Activated CD8-positive, alpha-beta T cell treated with anti-CD3 and anti-CD28 coated beads, Interleukin-2, amount 10 ng/mL, durations not matched to agents 7 days and 5 days (primary cell): ENCODE measurements at regions of chr5 and their contacts with region 1.

Region 1: DNA sequence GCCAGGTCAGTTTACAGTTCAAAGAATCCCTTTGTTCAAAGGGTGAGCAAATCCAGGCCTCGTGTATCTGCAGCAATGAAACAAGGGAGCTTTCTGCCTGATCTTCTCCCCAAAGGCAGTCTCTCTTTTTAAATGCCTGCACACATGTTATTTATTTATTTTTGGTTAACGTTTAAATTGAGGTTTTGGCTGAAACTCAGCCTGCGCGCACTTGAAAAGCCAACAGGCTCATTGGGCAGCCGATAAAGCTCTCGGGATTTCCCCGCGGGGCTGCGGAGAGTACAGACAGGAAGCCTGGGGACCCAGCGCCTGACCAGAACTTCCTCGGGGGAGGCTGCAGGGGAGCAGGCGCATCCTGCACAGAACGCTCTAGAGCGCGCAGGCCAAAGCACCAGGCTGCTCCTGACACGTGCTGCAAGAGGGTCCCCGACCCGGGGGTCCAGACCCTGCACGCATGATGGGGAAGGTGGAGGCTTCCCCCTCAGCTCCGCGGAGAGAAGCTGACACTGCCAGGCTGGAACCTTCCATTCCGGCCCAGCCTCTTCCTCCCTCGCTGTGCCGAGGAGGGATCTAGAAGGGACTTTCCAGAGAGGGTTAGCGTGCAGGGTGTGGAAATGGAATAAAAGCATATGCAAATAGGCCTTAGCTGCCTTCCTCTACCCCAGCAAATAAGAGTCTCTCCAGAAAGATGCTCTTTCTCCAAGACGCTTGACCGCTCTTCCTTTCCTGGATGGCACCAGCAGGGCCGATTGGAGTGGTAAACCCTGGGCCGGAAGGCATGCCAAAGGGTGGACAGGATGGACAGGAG is 46.1 kb downstream of the PTTG1 start:
- DNase-seq: peak; percentile 87
- ATAC-seq: peak; percentile 92
- H3K4me3 Mint-ChIP-seq: peak overlapping the region; percentile 86
- H3K27ac Mint-ChIP-seq: peak overlapping the region; percentile 90
- H3K4me1 Mint-ChIP-seq: peaks cover 80% of the 10 kb centered on the region
- H3K27me3 Mint-ChIP-seq: peaks cover 2% of the 10 kb centered on the region

Region 2: DNA sequence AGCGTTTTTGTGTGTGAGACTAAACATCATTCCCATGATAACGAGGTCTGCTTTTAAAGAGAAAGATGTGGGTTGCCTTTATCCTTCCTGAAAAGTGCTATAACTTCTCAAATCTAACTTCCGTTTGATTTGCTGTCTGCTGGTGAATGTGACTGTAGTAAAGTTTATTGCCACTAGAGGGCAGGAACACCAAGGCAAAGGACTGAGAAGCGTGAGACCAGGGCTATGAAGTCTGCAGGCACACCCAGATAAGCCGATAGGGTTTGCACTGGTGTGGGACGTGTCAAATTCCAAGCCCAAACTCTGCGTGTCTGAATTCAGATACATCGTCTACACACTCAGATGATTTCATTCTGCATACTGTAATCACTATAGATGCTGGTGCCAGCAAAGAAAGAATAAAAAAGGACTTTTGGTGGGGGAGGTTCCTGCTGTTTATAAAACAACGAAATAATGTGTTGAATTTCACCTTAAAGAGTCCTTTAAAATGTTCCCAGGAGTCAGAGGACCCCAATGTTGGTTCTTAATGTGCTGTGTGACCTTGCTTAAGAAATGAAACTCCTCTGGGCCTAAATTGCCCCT is 41.1 kb after region 1 on chr5:
- CTCF ChIA-PET with region 1: interaction called, 22 read pairs
- POLR2A ChIA-PET with region 1: interaction called, 20 read pairs
- DNase-seq: peak; percentile 79
- ATAC-seq: peak; percentile 68
- H3K4me3 Mint-ChIP-seq: no peak overlapping the region
- H3K27ac Mint-ChIP-seq: no peak overlapping the region
- H3K4me1 Mint-ChIP-seq: peaks cover 38% of the 10 kb centered on the region
- H3K27me3 Mint-ChIP-seq: peaks cover 7% of the 10 kb centered on the region